Right ventricle myocardium inferior (tissue), 1 donor: ENCODE measurements at regions of chr9 and their contacts with region 1.

Region 1: GRCh38 chr9:33623658-33624586 is 99.9 kb downstream of the ANKRD18B start:
- DNase-seq: peak; percentile 65
- ATAC-seq: peak; percentile 70

Region 2: DNA sequence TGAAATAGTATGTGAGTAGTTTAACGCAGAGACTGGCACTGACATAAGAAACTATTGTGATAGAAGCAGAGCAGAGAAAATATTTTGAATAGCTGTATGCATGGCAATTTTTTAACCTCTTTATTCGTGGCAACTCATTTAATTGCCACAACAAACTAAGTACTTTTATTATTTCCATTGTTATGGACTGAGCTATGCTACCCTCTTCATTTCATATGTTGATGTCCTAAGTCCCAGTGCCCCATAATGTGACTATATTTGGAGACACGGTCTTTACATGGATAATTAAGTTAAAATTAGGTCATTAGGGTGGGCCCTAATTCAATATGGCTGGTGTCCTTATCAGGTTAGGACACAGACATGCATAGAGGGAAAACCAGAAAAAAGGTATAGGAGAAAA is 85.3 kb after region 1 on chr9:
- intact Hi-C with region 1: no loop called
- DNase-seq: no peak
- ATAC-seq: no peak

Region 3: DNA sequence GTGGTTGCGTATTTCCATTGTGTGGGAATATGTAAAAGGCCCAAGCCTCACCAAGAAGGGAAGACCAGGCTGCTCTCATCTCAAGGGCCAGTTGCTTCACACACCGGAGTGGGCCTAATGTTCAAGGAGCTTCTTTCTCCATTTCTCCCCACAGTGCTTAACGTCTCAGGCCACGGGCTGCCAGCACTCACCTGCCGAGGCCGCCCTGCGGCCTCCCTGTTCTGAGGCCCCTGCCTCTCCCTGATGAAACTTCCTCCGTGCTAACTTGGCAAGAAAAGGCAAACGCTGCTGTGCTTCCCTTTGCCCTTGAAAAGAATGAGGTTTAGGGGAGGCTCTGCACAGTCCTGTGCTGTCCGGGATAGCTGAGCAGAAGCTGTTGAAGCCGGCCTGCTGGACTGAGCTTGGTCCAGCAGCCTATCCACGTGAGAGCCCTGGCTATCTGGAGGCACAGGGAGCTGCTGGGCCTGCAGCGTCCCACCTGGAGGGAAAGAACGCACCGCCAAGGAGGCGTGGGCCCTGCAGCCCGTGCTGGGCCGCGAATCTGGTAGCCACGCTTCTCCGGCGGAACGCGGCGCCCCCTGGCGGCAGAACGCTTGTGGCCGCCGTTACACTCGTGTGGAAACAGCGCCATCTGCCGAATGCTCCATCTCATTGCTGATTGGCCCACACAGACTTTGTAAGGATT is 97.9 kb after region 1 on chr9:
- intact Hi-C with region 1: loop called (anchors 1 kb)
- DNase-seq: peak; percentile 94
- ATAC-seq: peak; percentile 87